AG04449 (cell line): ENCODE measurements at regions of chr16 and their contacts with region 1.

Region 1: GRCh38 chr16:67415872-67416793 is at the start of gene ZDHHC1:
- DNase-seq: no peak
- H3K4me3 ChIP-seq: peak within 1 kb of the TSS; percentile 73
- CTCF ChIP-seq: peak; percentile 69

Region 2: DNA sequence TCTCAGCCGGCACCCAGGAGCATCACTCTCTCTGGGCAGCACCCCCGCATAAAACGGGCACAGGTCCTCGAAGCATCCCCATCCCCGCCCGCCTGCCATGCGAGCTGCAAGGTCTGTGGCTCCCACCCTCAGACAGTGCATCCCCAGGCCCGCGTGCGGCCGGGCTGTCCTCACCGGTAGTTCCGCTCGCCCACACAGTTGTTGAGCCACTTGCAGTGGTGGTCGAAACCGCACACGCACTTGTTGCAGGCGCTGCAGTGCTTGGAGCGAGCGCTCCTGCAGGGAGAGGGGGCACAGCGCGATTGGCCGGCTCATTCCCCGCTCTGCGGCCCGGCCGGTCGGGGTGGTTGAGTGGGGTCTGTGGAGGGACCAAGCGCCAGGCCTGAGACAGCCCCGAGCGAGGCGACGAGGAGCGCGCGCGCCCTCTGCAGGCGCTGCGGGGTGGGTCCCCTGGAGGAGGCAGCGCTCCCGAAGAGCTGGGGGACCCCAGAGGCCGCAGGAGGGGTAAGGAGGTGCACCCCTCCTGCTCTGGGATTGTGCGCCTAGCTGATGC is 16.9 kb before region 1 on chr16:
- CTCF ChIA-PET with region 1: interaction called, 10 read pairs
- POLR2A ChIA-PET with region 1: no interaction called
- DNase-seq: no peak
- H3K4me3 ChIP-seq: no peak overlapping the region
- CTCF ChIP-seq: peak; percentile 83